Transverse colon (tissue), 4 donors: ENCODE measurements at regions of chr11 and their contacts with region 1.

Region 1: DNA sequence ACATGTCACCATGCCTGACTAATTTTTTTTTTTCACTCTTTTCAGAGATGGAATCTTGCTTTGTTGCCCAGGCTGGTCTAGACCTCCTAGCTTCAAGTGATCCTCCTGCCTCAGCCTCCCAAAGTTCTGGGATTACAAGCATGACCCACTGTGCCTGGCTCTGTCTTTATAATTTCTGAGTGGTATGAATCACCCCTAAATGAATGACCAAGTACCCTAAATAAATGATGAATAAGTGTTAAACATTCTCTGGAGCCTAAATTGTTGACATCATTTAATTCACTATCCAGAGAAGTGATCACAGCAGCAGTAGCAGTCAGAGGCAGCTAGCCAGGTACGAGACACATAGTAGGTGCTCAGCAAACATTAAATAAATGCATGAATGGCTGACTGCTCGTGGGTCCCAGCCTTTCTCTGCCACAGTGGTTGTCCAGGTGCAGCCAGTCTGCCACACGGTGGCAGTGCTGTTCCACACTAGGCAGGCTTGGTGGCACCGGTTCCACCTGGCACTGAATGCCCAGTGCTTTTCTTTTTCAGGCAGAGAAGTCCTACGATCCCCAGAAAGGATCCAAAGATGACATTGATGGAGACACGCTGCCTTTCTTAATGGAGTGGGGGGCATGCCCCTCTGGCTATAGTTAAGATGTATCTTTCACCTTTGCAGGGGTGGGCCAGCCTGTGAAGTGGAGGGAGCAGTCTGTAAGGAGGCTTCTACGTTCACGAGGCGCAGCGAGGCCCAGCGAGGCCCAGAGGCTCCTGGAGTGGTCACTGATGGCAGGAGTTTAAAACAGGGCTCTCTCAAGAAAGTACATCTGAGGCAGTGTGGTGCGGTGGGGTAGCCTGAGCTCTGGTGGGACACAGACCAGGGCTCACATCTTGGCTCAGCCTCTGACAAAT is 8.7 kb upstream of the TTC12 start:
- DNase-seq: peak; percentile 77
- H3K4me3 ChIP-seq: no peak overlapping the region
- H3K27ac ChIP-seq: no peak overlapping the region
- H3K4me1 ChIP-seq: no peaks in the 10 kb centered on the region
- H3K27me3 ChIP-seq: no peaks in the 10 kb centered on the region
- CTCF ChIP-seq: peak; percentile 80 to 88 (median 88)
- EP300 ChIP-seq: no peak
- POLR2A ChIP-seq: no peak

Region 2: DNA sequence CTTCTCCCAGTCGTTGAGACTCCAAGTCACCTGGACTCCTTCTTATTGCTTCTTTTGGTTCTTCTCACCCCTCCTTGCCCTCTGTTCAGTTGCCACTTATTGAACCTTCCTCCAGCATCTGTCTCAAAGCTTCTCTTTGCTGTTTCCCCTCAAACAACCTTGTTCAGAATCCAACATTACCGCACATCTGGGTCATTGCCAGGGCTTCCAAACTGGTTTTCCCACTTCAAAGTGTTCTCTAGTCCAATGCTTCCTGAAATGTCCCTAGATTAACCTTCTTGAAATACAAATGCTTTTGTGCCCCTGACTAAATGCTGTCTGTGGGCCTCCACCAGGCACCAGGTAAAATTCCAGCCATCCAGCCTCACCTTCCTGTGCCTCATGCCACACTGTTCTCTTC is 92.1 kb before region 1 on chr11:
- in situ Hi-C with region 1: no loop called
- intact Hi-C with region 1: no loop called
- DNase-seq: no peak
- H3K4me3 ChIP-seq: no peak overlapping the region
- H3K27ac ChIP-seq: no peak overlapping the region
- H3K4me1 ChIP-seq: no peaks in the 10 kb centered on the region
- H3K27me3 ChIP-seq: no peaks in the 10 kb centered on the region
- CTCF ChIP-seq: no peak
- EP300 ChIP-seq: no peak
- POLR2A ChIP-seq: no peak

Region 3: GRCh38 chr11:113532697-113533424 is 227.2 kb after region 1 on chr11:
- in situ Hi-C with region 1: loop called (anchors 5 to 10 kb)
- intact Hi-C with region 1: loop called (anchors 5 kb)
- DNase-seq: peak; percentile 77
- H3K4me3 ChIP-seq: no peak overlapping the region
- H3K27ac ChIP-seq: no peak overlapping the region
- H3K4me1 ChIP-seq: peaks cover 0 to 6% (median 0%) of the 10 kb centered on the region in 4 donors
- H3K27me3 ChIP-seq: no peaks in the 10 kb centered on the region
- CTCF ChIP-seq: peak; percentile 65 to 86 (median 81)
- EP300 ChIP-seq: no peak
- POLR2A ChIP-seq: no peak

Region 4: GRCh38 chr11:113796663-113797259 is 491.1 kb after region 1 on chr11:
- in situ Hi-C with region 1: loop called in 1 of 4 experiments (anchors 10 kb)
- intact Hi-C with region 1: no loop called
- DNase-seq: no peak
- H3K4me3 ChIP-seq: no peak overlapping the region
- H3K27ac ChIP-seq: no peak overlapping the region
- H3K4me1 ChIP-seq: no peaks in the 10 kb centered on the region
- H3K27me3 ChIP-seq: no peaks in the 10 kb centered on the region
- CTCF ChIP-seq: peak; percentile 44 to 62 (median 55)
- EP300 ChIP-seq: no peak
- POLR2A ChIP-seq: no peak